WTC11 (cell line): ENCODE measurements at regions of chr19 and their contacts with region 1.

Region 1: DNA sequence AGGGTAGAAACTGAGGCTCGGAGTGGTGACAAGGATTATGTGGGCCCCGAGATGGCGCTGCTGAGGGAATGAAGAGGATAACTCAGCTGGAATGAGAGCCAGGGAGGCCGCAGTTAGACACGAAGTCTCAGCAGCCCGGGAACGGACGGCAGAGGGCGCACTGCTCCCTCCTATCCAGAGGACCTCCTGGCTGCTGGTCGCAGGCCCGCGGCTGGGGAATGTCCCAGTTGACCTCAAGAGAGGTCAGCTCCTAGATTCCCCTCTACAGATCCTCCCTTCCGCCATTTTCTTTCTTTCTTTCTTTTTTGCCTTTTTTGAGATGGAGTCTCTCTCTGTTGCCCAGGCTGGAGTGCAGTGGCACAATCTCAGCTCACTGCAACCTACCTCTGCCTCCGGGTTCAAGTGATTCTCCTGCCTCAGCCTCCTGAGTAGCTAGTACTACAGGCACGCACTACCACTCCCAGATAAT is 24.1 kb upstream of the ASPDH start:
- DNase-seq: peak; percentile 98
- ATAC-seq: peak; percentile 97
- H3K4me3 Mint-ChIP-seq: no peak overlapping the region
- H3K27ac Mint-ChIP-seq: no peak overlapping the region
- H3K4me1 Mint-ChIP-seq: 0 out of 2 replicates have a peak, but pooled peaks cover 3% of the 10 kb centered on the region
- H3K27me3 Mint-ChIP-seq: peaks cover 8% of the 10 kb centered on the region
- CTCF ChIP-seq: peak; percentile 88

Region 2: GRCh38 chr19:50511068-50511822 is 26.6 kb before region 1 on chr19 and contains the start of gene JOSD2:
- CTCF ChIA-PET with region 1: interaction called, 55 read pairs
- POLR2A ChIA-PET with region 1: no interaction called
- DNase-seq: peak; percentile 96
- ATAC-seq: peak; percentile 89
- H3K4me3 Mint-ChIP-seq: peak within 1 kb of the TSS; percentile 82
- H3K27ac Mint-ChIP-seq: peak within 1 kb of the TSS; percentile 95
- H3K4me1 Mint-ChIP-seq: peaks cover 14% of the 10 kb centered on the region
- H3K27me3 Mint-ChIP-seq: peaks cover 45% of the 10 kb centered on the region
- CTCF ChIP-seq: no peak
- total RNA-seq, gene JOSD2: 4.0 to 4.3 TPM (median 4.0 TPM) in 3 replicates

Region 3: GRCh38 chr19:50568321-50569075 is 30.7 kb after region 1 on chr19 and contains the start of gene LRRC4B:
- CTCF ChIA-PET with region 1: interaction called, 16 read pairs
- POLR2A ChIA-PET with region 1: no interaction called
- DNase-seq: peak; percentile 67
- ATAC-seq: peak; percentile 10; the same call in 1 of the 2 replicates
- H3K4me3 Mint-ChIP-seq: peak within 1 kb of the TSS; percentile 66
- H3K27ac Mint-ChIP-seq: no peak within 1 kb of the TSS
- H3K4me1 Mint-ChIP-seq: peaks cover 38% of the 10 kb centered on the region
- H3K27me3 Mint-ChIP-seq: peaks cover 68% of the 10 kb centered on the region
- CTCF ChIP-seq: no peak
- total RNA-seq, gene LRRC4B: 10.0 to 11.0 TPM (median 10.9 TPM) in 3 replicates

Region 4: GRCh38 chr19:50607874-50608785 is 70.3 kb after region 1 on chr19:
- CTCF ChIA-PET with region 1: interaction called, 21 read pairs
- POLR2A ChIA-PET with region 1: interaction called, 4 read pairs
- DNase-seq: peak; percentile 100
- ATAC-seq: peak; percentile 84
- H3K4me3 Mint-ChIP-seq: peak overlapping the region; percentile 62
- H3K27ac Mint-ChIP-seq: peak overlapping the region; percentile 83
- H3K4me1 Mint-ChIP-seq: peaks cover 12% of the 10 kb centered on the region; the same call in 1 of the 2 replicates
- H3K27me3 Mint-ChIP-seq: peaks cover 74% of the 10 kb centered on the region
- CTCF ChIP-seq: peak; percentile 66

Region 5: GRCh38 chr19:50705422-50706019 is 167.7 kb after region 1 on chr19:
- CTCF ChIA-PET with region 1: interaction called, 24 read pairs
- POLR2A ChIA-PET with region 1: no interaction called
- DNase-seq: peak; percentile 62
- ATAC-seq: peak; percentile 82
- H3K4me3 Mint-ChIP-seq: no peak overlapping the region
- H3K27ac Mint-ChIP-seq: no peak overlapping the region
- H3K4me1 Mint-ChIP-seq: peaks cover 9% of the 10 kb centered on the region; the same call in 1 of the 2 replicates
- H3K27me3 Mint-ChIP-seq: peaks cover 38% of the 10 kb centered on the region
- CTCF ChIP-seq: peak; percentile 37